Activated T-helper 1 cell treated with anti-CD3 and anti-CD28 coated beads, Interleukin-12 subunit alpha, Interleukin-12 subunit beta, Interleukin-2, Interleukin-4 antibody, amounts not matched to agents 30 ng/mL and 10 ng/mL and 1 ng/mL, durations not matched to agents 14 hours and 24 hours and 36 hours (primary cell): ENCODE measurements at regions of chr11 and their contacts with region 1.

Region 1: DNA sequence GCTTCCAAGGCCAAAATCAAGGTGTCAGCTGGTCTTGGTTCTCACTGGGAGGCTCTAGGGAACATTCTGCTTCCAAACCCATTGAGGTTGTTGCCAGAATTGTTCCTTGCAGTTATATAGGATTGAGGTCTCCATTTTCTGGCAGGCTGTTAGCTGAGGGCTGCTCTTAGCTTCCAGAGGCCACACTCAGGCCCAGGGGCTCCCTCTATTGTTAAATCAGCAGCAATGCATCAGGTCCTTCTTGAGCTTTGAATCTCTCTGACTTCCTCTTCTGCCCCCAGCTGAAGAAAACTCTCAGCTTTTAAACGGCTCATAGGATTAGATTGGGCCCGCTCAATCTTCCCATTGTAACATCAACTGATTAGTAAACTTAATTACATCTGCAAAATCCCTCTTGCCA is 39.3 kb upstream of the BSX start:
- DNase-seq: peak; percentile 9
- H3K4me3 Mint-ChIP-seq: no peak overlapping the region
- H3K27ac Mint-ChIP-seq: no peak overlapping the region
- H3K4me1 Mint-ChIP-seq: peaks cover 10% of the 10 kb centered on the region
- H3K27me3 Mint-ChIP-seq: peaks cover 24% of the 10 kb centered on the region

Region 2: GRCh38 chr11:122628810-122629555 is 392.0 kb before region 1 on chr11:
- intact Hi-C with region 1: loop called (anchors 5 kb)
- DNase-seq: peak; percentile 34
- H3K4me3 Mint-ChIP-seq: no peak overlapping the region
- H3K27ac Mint-ChIP-seq: no peak overlapping the region
- H3K4me1 Mint-ChIP-seq: peaks cover 4% of the 10 kb centered on the region
- H3K27me3 Mint-ChIP-seq: peaks cover 5% of the 10 kb centered on the region

Region 3: DNA sequence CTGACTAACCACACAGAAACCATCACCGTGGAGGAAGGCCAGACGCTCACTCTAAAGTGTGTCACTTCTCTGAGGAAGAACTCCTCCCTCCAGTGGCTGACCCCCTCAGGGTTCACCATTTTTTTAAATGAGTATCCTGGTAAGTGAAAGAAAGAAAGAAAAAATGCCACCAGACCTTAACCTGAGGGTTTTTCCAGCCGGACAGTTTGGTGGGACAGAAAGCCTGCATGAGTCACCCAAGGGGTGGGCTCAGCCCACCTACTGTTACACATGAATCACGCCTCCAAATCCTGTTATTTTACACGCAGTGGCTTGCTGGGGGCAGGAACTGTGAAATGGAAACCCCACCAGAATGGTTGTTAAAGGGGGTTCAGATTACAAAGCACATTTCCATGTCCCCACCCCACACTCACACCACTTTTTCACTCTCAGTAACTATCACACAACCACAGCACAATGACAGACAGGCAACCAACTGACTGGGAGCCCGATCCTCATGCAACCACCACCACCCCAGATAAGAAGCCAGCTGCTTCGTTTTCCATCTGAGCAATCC is 170.8 kb before region 1 on chr11:
- intact Hi-C with region 1: no loop called
- DNase-seq: no peak
- H3K4me3 Mint-ChIP-seq: no peak overlapping the region
- H3K27ac Mint-ChIP-seq: peak overlapping the region; percentile 59
- H3K4me1 Mint-ChIP-seq: peaks cover 27% of the 10 kb centered on the region
- H3K27me3 Mint-ChIP-seq: peaks cover 9% of the 10 kb centered on the region

Region 4: GRCh38 chr11:122863704-122864326 is 157.2 kb before region 1 on chr11:
- intact Hi-C with region 1: loop called (anchors 1 kb)
- DNase-seq: no peak
- H3K4me3 Mint-ChIP-seq: no peak overlapping the region
- H3K27ac Mint-ChIP-seq: no peak overlapping the region
- H3K4me1 Mint-ChIP-seq: no peaks in the 10 kb centered on the region
- H3K27me3 Mint-ChIP-seq: peaks cover 47% of the 10 kb centered on the region

Region 5: DNA sequence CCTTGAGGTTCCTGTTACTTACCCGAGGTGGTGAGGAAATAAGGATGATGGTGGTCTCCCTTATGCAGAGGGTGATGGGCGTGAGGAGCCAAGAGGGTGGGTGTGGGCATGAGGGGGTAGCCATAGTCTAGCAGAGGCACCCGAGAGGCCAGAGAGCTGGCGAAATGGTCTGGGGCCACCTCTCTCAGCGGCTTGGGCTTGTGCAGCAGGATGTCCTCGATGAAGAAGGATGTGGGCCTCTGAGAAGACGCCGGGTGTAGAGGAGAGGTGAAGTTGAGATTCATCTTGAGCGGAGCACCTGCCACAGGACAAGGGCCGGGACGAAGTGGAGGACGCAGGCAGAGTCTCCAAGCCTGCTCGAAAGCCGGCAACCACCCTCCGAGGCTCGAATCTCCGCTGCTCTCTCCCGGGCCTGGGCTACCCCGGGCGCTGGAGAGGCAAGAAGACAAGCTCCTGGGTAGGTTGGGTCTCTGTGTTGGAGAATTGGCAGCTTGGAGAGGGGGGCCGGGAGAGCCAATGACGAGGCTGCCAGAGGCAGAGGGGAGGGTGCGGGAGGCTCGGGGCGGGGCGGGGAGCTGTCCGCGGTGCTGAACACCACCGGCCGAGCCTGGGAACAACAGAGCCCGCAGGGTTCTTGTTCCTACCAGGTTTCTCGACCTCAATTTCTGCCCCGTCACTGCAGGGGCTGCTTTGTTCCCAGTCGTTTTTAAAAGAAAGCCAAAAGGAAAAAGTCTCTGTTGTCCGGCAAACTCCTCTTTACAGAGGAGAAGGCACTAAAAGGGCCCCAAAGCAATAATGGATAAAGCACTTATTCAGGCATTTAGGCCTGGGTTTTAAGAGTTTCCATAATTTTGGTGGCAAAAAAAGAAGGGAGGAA is 39.3 kb before region 1 on chr11 and contains the start of gene BSX:
- intact Hi-C with region 1: loop called (anchors 5 kb)
- DNase-seq: peak; percentile 21
- H3K4me3 Mint-ChIP-seq: no peak within 1 kb of the TSS
- H3K27ac Mint-ChIP-seq: no peak within 1 kb of the TSS
- H3K4me1 Mint-ChIP-seq: peaks cover 25% of the 10 kb centered on the region
- H3K27me3 Mint-ChIP-seq: peaks cover 90% of the 10 kb centered on the region
- total RNA-seq, gene BSX: not detected in 2 replicates